CD8-positive, alpha-beta T cell (primary cell): ENCODE measurements at regions of chr2 and their contacts with region 1.

Region 1: GRCh38 chr2:216139884-216140283 is 30.7 kb downstream of the XRCC5 start:
- DNase-seq: peak in 6 of 9 experiments; percentile 3 to 68 (median 42)
- ATAC-seq: peak; percentile 56
- H3K4me3 ChIP-seq: no peak overlapping the region
- H3K4me3 Mint-ChIP-seq: no peak overlapping the region
- H3K27ac ChIP-seq: no peak overlapping the region
- H3K27ac Mint-ChIP-seq: peak overlapping the region; percentile 23
- H3K4me1 ChIP-seq: no peaks in the 10 kb centered on the region
- H3K4me1 Mint-ChIP-seq: peaks cover 23% of the 10 kb centered on the region
- H3K27me3 ChIP-seq: no peaks in the 10 kb centered on the region
- H3K27me3 Mint-ChIP-seq: no peaks in the 10 kb centered on the region
- CTCF ChIP-seq: peak; percentile 59

Region 2: GRCh38 chr2:215811409-215812345 is 328.2 kb before region 1 on chr2:
- CTCF ChIA-PET with region 1: no interaction called
- POLR2A ChIA-PET with region 1: no interaction called
- intact Hi-C with region 1: no loop called
- DNase-seq: peak in 2 of 9 experiments; percentile 17 to 51
- ATAC-seq: no peak
- H3K4me3 ChIP-seq: no peak overlapping the region
- H3K4me3 Mint-ChIP-seq: no peak overlapping the region
- H3K27ac ChIP-seq: no peak overlapping the region
- H3K27ac Mint-ChIP-seq: peak overlapping the region; percentile 8
- H3K4me1 ChIP-seq: peaks cover 14% of the 10 kb centered on the region
- H3K4me1 Mint-ChIP-seq: peaks cover 21% of the 10 kb centered on the region
- H3K27me3 ChIP-seq: no peaks in the 10 kb centered on the region
- H3K27me3 Mint-ChIP-seq: no peaks in the 10 kb centered on the region
- CTCF ChIP-seq: no peak

Region 3: GRCh38 chr2:216064011-216064630 is 75.8 kb before region 1 on chr2:
- CTCF ChIA-PET with region 1: interaction called, 5 read pairs
- POLR2A ChIA-PET with region 1: no interaction called
- intact Hi-C with region 1: loop called in 1 of 2 experiments (anchors 5 kb)
- DNase-seq: peak in 1 of 9 experiments; percentile 5
- ATAC-seq: no peak
- H3K4me3 ChIP-seq: no peak overlapping the region
- H3K4me3 Mint-ChIP-seq: no peak overlapping the region
- H3K27ac ChIP-seq: no peak overlapping the region
- H3K27ac Mint-ChIP-seq: no peak overlapping the region
- H3K4me1 ChIP-seq: no peaks in the 10 kb centered on the region
- H3K4me1 Mint-ChIP-seq: peaks cover 12% of the 10 kb centered on the region
- H3K27me3 ChIP-seq: no peaks in the 10 kb centered on the region
- H3K27me3 Mint-ChIP-seq: no peaks in the 10 kb centered on the region
- CTCF ChIP-seq: no peak

Region 4: GRCh38 chr2:216159144-216159543 is 19.3 kb after region 1 on chr2:
- CTCF ChIA-PET with region 1: interaction called, 3 read pairs
- POLR2A ChIA-PET with region 1: interaction called, 6 read pairs
- intact Hi-C with region 1: loop called in 1 of 2 experiments (anchors 2 kb)
- DNase-seq: no peak
- ATAC-seq: no peak
- H3K4me3 ChIP-seq: no peak overlapping the region
- H3K4me3 Mint-ChIP-seq: no peak overlapping the region
- H3K27ac ChIP-seq: no peak overlapping the region
- H3K27ac Mint-ChIP-seq: peak overlapping the region; percentile 3
- H3K4me1 ChIP-seq: peaks cover 5% of the 10 kb centered on the region
- H3K4me1 Mint-ChIP-seq: peaks cover 30% of the 10 kb centered on the region
- H3K27me3 ChIP-seq: no peaks in the 10 kb centered on the region
- H3K27me3 Mint-ChIP-seq: no peaks in the 10 kb centered on the region
- CTCF ChIP-seq: no peak

Region 5: DNA sequence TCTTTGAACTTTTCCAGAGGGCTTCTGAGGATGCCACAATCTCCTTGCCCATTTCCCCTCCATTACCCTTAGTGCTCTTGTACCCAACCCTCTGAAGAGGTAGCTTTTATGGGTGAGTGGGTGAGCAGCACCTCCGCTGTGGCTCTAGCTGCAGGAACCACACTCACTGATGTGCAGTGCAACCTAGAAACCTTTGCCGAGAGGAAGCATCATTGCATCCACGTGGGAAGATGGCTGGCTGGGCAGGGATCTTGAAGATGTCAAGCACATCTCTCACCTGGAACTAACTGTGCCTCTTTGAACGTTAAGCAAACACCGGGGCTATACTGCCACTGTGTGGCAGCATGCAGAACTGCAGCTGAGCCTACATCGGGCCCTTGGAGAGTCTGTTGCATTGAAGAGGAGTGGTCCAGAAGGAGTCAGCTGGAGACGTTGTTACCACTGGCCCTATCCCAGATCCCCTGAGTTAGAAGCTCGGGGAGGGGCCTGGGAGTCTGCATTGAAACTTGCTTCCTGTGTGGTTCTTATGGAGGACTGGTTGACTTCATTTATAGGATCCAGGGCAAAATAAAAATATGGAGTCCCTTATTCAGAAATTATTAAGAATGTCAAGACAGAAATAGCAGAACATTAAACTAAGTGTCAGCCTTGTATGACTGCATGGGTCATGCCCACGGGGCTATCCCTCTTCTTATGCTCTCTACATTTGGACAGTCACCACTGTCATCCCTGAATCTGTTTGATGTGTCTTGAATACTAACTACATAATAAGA is 526.8 kb after region 1 on chr2:
- CTCF ChIA-PET with region 1: no interaction called
- POLR2A ChIA-PET with region 1: no interaction called
- intact Hi-C with region 1: no loop called
- DNase-seq: peak; percentile 46 to 79 (median 66)
- ATAC-seq: peak; percentile 97
- H3K4me3 ChIP-seq: no peak overlapping the region
- H3K4me3 Mint-ChIP-seq: no peak overlapping the region
- H3K27ac ChIP-seq: no peak overlapping the region
- H3K27ac Mint-ChIP-seq: no peak overlapping the region
- H3K4me1 ChIP-seq: no peaks in the 10 kb centered on the region
- H3K4me1 Mint-ChIP-seq: no peaks in the 10 kb centered on the region
- H3K27me3 ChIP-seq: peaks cover 0 to 2% of the 10 kb centered on the region in 2 experiments
- H3K27me3 Mint-ChIP-seq: peaks cover 18% of the 10 kb centered on the region
- CTCF ChIP-seq: peak; percentile 98